HCT116 (cell line): ENCODE measurements at regions of chr10 and their contacts with region 1.

Region 1: GRCh38 chr10:72297968-72298773 is 24.4 kb downstream of the DDIT4 start:
- DNase-seq: peak; percentile 94
- ATAC-seq: peak; percentile 90
- H3K4me3 ChIP-seq: peak overlapping the region; percentile 58 to 64
- H3K27ac ChIP-seq: peak overlapping the region; percentile 98
- H3K4me1 ChIP-seq: peaks cover 25 to 62% of the 10 kb centered on the region in 2 experiments
- H3K27me3 ChIP-seq: no peaks in the 10 kb centered on the region
- CTCF ChIP-seq: no peak
- POLR2A ChIP-seq: no peak
- RAD21 ChIP-seq: no peak

Region 2: GRCh38 chr10:71582019-71582418 is 716.2 kb before region 1 on chr10:
- CTCF ChIA-PET with region 1: no interaction called
- POLR2A ChIA-PET with region 1: no interaction called
- RAD21 ChIA-PET with region 1: no interaction called
- intact Hi-C with region 1: no loop called
- DNase-seq: no peak
- ATAC-seq: no peak
- H3K4me3 ChIP-seq: no peak overlapping the region
- H3K27ac ChIP-seq: no peak overlapping the region
- H3K4me1 ChIP-seq: no peaks in the 10 kb centered on the region
- H3K27me3 ChIP-seq: peaks cover 17% of the 10 kb centered on the region
- CTCF ChIP-seq: no peak
- POLR2A ChIP-seq: no peak
- RAD21 ChIP-seq: no peak

Region 3: DNA sequence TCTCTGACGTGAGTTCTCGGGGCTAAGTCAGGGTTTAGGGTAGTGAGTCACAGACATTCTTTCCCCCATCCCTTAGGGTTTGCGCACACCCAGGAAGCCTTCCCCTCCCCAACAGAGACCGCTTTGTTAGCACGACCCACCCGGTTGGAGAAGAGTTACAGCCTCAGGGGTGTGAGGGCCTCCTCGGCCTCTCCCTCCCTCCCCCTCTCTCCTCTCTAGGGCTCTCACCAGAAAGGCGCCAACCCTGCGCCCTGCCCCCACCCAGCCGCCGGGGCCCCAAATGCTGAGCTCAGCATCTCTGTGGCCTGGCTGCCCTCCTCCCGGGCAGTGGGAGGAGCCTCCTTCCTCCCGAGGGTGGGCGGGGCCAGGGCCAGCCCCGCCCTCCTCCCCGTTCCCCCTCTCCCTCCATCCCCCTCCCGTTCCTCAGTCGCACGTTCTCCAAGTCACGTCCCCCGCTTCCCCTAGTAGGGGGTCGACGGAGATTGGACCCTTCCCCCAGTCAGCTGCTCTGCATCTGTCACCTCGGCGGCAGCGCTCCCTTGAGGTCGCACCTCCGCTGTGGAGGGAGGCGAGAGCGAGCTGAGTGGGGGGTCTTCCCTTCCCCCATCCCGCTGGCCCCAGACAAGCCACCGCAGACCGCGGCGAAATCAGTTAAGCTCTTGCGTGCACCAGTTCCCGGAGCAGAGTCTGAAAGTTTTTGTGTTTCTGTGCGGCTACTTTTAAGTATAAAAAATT is 37.4 kb before region 1 on chr10:
- CTCF ChIA-PET with region 1: no interaction called
- POLR2A ChIA-PET with region 1: interaction called, 11 read pairs
- RAD21 ChIA-PET with region 1: no interaction called
- intact Hi-C with region 1: no loop called
- DNase-seq: no peak
- ATAC-seq: peak; percentile 83
- H3K4me3 ChIP-seq: peak overlapping the region; percentile 46 to 64
- H3K27ac ChIP-seq: peak overlapping the region; percentile 86
- H3K4me1 ChIP-seq: peaks cover 44 to 72% of the 10 kb centered on the region in 2 experiments
- H3K27me3 ChIP-seq: no peaks in the 10 kb centered on the region
- CTCF ChIP-seq: no peak
- POLR2A ChIP-seq: no peak
- RAD21 ChIP-seq: no peak

Region 4: DNA sequence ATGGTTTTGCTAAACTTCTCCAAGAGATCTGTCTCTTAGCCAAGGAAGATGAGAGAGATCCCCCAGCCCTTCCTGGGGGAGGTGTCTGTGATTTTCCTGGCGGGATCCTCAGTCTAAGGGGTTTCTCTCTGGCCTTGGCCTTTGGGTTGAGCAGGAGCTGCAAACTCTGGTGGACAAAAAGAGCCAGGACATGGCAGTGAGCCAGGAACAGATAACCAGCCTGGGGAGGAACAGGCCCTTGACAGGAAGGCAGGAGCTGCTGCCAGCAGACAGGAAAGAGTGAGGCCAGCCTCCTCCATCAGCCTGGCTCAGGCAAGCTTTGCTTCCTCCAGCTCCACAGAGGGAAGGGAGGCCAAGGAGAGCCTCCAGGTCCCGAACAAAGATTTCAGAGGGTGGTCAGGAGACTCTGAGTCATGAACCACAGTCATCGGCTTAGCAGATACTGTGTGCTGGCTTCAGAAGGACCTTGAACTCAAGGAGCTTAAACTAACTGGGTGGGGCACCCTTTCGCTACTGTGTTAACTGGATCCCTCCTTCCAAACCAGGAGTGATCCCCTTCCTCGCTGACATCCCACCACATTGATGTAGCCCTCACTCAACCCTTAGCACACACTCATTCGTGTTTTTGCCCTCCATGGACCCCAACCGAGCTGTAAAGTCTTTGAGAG is 10.3 kb after region 1 on chr10:
- CTCF ChIA-PET with region 1: interaction called, 3 read pairs
- POLR2A ChIA-PET with region 1: interaction called, 42 read pairs
- RAD21 ChIA-PET with region 1: no interaction called
- intact Hi-C with region 1: no loop called
- DNase-seq: peak; percentile 82
- ATAC-seq: peak; percentile 74
- H3K4me3 ChIP-seq: peak overlapping the region in 1 of 2 experiments; percentile 5; a peak in 1 of 4 replicates
- H3K27ac ChIP-seq: peak overlapping the region; percentile 54
- H3K4me1 ChIP-seq: peaks cover 30 to 53% of the 10 kb centered on the region in 2 experiments
- H3K27me3 ChIP-seq: no peaks in the 10 kb centered on the region
- CTCF ChIP-seq: no peak
- POLR2A ChIP-seq: no peak
- RAD21 ChIP-seq: no peak

Region 5: DNA sequence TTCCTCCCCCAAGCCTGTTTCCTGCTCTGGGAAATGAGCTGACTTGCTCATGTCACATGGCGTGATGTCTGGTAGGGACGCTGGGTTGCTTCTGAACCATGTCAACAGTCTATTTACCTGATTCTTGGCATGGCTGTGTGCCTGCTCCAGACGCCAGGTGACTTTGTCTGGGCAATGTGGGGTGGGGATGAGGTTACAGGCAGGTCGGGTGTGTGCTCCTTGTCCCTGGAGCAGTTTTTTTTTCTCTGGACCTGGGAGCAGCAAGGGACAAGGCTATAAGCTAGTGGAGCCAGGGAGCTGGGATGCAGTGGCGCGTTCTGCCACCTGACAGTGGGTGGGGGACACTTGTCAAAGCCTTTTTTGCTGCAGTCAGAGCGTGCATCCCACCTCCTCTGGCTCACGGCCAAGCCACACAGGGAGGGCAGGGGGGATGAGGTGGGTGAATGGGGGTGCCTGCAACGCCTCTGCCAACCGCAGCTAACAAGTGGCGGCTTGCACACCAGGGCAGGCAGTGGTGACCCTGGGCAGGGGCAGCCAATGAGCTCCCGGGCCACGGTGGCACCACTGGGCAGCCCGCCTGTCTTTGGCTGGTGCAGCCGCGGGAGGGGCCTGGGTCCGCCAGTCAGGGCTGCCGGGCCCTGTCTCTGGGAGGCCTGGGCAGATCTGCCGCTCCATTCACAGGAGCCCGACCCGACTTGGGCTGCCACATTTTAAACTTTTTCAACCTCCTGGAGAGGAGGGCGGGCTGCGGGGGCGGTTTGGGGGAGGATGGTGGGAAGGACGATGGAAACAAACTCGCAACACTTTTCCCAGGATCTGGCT is 33.6 kb after region 1 on chr10:
- CTCF ChIA-PET with region 1: interaction called, 4 read pairs
- POLR2A ChIA-PET with region 1: interaction called, 160 read pairs
- RAD21 ChIA-PET with region 1: interaction called in 1 of 2 experiments, 8 read pairs
- intact Hi-C with region 1: no loop called
- DNase-seq: peak; percentile 80
- ATAC-seq: peak; percentile 92
- H3K4me3 ChIP-seq: peak overlapping the region; percentile 22 to 28
- H3K27ac ChIP-seq: peak overlapping the region; percentile 92
- H3K4me1 ChIP-seq: peaks cover 50 to 63% of the 10 kb centered on the region in 2 experiments
- H3K27me3 ChIP-seq: no peaks in the 10 kb centered on the region
- CTCF ChIP-seq: peak in 2 of 3 experiments; percentile 38 to 50; a peak in 3 of 6 replicates
- POLR2A ChIP-seq: peak; percentile 36
- RAD21 ChIP-seq: no peak

Region 6: DNA sequence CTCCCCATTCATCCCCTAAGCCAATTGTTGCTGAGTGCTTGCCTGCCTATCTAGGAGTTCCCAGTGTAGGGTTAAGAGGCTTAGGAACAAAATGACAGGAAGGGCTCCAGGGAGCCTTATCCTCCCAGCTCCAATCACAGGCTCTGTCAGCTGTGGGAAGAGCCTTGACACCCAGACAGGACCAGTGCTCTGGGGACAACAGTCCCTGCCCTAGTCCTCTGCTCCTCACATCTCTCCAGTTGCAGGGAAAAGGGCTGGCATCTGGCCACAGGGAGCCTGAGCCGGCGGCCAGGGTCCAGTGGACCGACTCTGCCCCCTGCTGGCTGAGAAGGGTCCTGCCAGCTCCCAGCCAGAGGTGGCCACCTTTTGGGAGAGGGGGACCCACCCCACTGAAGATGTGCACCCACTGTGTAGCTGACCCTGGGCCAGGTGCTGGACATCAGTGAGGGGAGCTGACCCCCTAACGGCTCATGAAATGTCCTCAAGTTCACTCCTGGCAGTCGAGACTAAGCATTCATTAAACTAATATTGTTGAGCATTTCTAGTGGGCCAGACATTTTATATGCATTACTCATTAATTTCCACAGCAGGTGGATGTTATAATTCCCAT is 39.0 kb after region 1 on chr10:
- CTCF ChIA-PET with region 1: interaction called, 4 read pairs
- POLR2A ChIA-PET with region 1: interaction called, 160 read pairs
- RAD21 ChIA-PET with region 1: interaction called in 1 of 2 experiments, 4 read pairs
- intact Hi-C with region 1: no loop called
- DNase-seq: no peak
- ATAC-seq: peak; percentile 72
- H3K4me3 ChIP-seq: no peak overlapping the region
- H3K27ac ChIP-seq: peak overlapping the region; percentile 35; the same call in 1 of the 2 replicates
- H3K4me1 ChIP-seq: peaks cover 13 to 24% of the 10 kb centered on the region in 2 experiments
- H3K27me3 ChIP-seq: no peaks in the 10 kb centered on the region
- CTCF ChIP-seq: peak in 2 of 3 experiments; percentile 96 to 98; a peak in 4 of 6 replicates
- POLR2A ChIP-seq: no peak
- RAD21 ChIP-seq: no peak